Panc1 (cell line): ENCODE measurements at regions of chr20 and their contacts with region 1.

Region 1: GRCh38 chr20:58117944-58118343 is 110.5 kb downstream of the ANKRD60 start:
- DNase-seq: no peak
- ATAC-seq: no peak
- H3K4me3 ChIP-seq: no peak overlapping the region
- H3K27ac ChIP-seq: no peak overlapping the region
- H3K4me1 ChIP-seq: no peaks in the 10 kb centered on the region
- H3K27me3 ChIP-seq: no peaks in the 10 kb centered on the region
- CTCF ChIP-seq: no peak

Region 2: DNA sequence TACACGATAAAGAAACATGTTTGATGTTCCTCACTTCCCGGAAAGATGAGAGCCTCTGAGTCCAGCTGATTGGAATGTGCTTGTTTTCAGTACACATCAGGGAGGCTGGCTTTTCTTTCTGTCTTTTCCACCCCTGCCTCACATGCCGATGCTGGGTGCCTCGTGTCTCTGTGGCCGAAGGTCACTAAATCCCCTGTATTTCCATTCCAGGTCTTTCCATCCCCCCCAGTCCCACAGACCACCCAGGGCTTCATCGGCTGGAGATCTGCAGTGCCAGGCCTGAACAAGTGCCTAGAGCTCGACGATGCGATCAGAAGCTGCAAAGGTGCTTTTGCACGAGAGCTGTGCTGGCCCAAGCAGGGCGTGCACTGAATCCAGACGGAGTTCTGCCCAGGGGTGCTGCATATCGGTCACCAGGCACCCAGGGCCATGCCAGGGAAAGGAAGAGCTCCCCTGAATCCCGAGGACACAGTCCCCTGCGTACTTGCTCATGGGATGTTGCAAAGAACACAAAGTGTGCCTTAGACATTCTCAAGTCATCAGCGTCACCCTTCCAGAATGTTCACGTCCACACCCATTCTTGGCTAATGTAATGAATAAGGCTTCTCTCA is 42.6 kb after region 1 on chr20:
- CTCF ChIA-PET with region 1: no interaction called
- POLR2A ChIA-PET with region 1: interaction called, 17 read pairs
- in situ Hi-C with region 1: no loop called
- intact Hi-C with region 1: no loop called
- DNase-seq: no peak
- ATAC-seq: no peak
- H3K4me3 ChIP-seq: no peak overlapping the region
- H3K27ac ChIP-seq: no peak overlapping the region
- H3K4me1 ChIP-seq: no peaks in the 10 kb centered on the region
- H3K27me3 ChIP-seq: no peaks in the 10 kb centered on the region
- CTCF ChIP-seq: no peak